AG04449 (cell line): ENCODE measurements at regions of chr1 and their contacts with region 1.

Region 1: GRCh38 chr1:115980998-115981993 is 5.0 kb downstream of the SLC22A15 start:
- DNase-seq: no peak
- H3K4me3 ChIP-seq: no peak overlapping the region
- CTCF ChIP-seq: peak; percentile 66

Region 2: DNA sequence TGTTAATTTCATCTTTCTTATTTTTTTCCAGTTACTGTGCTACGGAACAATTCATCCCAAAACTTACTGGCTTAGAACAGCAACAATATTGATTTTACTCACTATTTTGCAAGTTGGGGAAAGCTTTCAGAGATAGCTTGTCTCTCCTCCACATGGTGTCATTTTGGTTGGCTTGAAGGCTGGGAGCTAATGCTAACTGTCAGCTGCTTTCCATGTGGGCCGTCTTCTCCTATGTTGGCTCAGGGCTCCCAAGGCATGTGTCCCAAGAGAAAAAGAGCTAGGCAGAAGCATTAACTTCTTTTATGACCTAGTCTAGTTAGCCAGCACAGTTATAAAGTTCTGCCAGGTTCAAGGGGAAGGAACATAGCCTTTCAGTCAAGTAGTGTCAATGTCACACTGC is 178.9 kb before region 1 on chr1:
- CTCF ChIA-PET with region 1: interaction called, 24 read pairs
- POLR2A ChIA-PET with region 1: no interaction called
- DNase-seq: no peak
- H3K4me3 ChIP-seq: no peak overlapping the region
- CTCF ChIP-seq: no peak

Region 3: DNA sequence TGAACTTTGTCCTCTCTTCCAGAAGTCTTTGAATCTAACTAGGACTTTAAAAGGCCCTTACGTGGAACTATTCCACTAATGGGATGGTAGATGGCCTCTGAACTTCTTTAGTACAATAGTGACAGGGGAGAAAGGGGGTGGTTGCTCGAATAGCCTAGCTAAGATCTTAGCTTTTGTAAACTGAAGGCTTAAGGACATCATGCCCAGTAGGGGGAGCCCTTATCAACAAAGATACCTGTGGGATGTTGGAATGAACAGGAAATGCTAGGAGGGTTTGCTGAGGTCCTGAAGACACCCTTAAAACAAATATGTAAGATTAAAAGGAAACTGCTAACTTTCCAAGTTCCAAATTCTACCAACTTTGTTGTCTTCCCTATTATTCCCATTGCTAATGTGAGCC is 173.6 kb before region 1 on chr1:
- CTCF ChIA-PET with region 1: interaction called, 26 read pairs
- POLR2A ChIA-PET with region 1: no interaction called
- DNase-seq: peak; percentile 9
- H3K4me3 ChIP-seq: no peak overlapping the region
- CTCF ChIP-seq: peak; percentile 75

Region 4: GRCh38 chr1:115991909-115992308 is 10.6 kb after region 1 on chr1:
- CTCF ChIA-PET with region 1: interaction called, 32 read pairs
- POLR2A ChIA-PET with region 1: no interaction called
- DNase-seq: no peak
- H3K4me3 ChIP-seq: no peak overlapping the region
- CTCF ChIP-seq: no peak